Activated naive CD4-positive, alpha-beta T cell treated with anti-CD3 and anti-CD28 coated beads for 36 hours (primary cell): ENCODE measurements at regions of chr14 and their contacts with region 1.

Region 1: DNA sequence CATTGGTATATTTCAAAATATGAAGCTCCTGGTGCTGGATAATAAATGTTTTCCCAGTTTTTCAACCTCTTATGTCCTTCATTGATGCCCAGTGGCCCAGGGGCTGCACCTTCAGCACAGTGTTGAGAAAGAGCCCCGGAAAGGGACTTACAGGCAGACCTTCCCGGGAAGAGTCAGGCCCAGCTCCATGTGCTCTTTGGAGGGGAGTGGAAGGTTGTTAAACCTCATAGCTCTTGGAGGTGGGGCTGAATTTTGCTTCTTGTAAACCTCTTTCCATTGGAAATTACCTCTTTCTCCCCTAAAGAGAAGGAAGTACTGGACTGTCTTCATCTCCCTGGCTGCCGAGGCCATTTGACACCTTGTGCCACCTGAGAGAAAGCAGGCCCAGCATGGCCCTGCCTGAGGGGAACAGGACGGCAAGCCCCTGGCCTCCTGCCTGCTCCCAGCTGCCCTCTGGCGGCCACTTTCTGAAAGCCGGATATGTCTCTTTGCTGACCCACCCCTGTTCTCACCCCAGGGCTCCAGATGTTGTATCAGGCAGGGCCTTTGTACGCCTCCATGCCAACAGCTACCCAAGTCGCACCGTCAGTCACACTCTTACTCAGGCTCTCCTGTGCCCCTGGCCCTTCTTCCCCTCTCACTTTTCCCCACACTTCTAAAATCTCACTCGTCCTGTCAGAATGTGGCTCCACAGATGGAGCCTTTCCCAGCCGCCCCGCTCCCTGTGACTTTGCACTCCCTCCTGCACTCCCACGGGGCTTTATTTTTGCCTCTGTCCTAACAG is 43.0 kb downstream of the EVL start:
- DNase-seq: peak; percentile 94
- H3K4me3 Mint-ChIP-seq: no peak overlapping the region
- H3K27ac Mint-ChIP-seq: peak overlapping the region; percentile 94
- H3K4me1 Mint-ChIP-seq: peaks cover 75% of the 10 kb centered on the region
- H3K27me3 Mint-ChIP-seq: no peaks in the 10 kb centered on the region

Region 2: DNA sequence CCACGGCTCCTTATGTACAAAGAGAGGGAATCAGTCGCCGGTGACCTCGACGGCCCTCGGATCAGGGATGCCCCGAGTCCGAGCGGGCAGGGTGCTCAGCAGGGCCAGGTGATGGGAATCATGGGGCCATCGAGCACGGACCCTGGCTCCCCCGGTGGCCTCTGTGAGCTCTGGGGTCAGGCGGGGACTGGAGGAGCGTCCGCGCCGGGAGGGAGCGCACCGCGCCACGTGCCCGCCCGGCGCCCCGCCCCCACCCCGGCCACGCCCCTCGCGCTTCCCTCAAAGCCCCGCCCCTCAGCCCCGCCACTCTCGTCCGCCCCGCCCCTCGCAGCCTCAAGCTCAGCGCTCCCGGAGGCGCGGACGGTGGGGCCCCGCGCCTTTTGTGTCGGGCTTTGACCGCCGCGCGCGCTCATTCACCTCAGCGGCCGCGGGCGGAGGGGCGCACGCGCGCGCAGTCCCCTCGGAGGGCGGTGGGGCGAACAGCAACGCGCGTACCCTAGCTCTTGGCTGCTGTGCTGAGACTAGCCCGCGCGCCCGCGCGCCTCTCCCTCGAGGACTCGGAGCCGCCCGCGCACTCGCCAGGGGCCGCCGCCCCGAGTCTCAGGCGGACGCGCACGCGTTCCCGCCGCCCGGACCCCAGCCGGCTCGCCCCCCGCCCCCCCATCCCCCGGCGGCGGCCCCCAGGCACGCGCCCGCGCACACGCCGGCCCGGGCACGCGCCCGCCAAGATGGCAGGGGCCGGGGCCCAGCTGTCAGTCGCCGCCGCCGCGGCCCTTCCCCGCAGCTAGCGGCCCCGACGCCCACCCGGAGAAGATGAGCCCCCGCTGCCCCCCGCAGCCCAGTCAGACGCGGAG is 136.9 kb before region 1 on chr14:
- CTCF ChIA-PET with region 1: interaction called, 3 read pairs
- intact Hi-C with region 1: loop called (anchors 2 kb)
- DNase-seq: peak; percentile 86
- H3K4me3 Mint-ChIP-seq: peak overlapping the region; percentile 52
- H3K27ac Mint-ChIP-seq: no peak overlapping the region
- H3K4me1 Mint-ChIP-seq: peaks cover 17% of the 10 kb centered on the region
- H3K27me3 Mint-ChIP-seq: peaks cover 12% of the 10 kb centered on the region

Region 3: GRCh38 chr14:100056964-100057795 is 51.1 kb before region 1 on chr14:
- CTCF ChIA-PET with region 1: interaction called, 34 read pairs
- intact Hi-C with region 1: loop called (anchors 1 kb)
- DNase-seq: no peak
- H3K4me3 Mint-ChIP-seq: peak overlapping the region; percentile 25
- H3K27ac Mint-ChIP-seq: peak overlapping the region; percentile 80
- H3K4me1 Mint-ChIP-seq: peaks cover 52% of the 10 kb centered on the region
- H3K27me3 Mint-ChIP-seq: no peaks in the 10 kb centered on the region

Region 4: GRCh38 chr14:100091386-100091785 is 16.8 kb before region 1 on chr14:
- CTCF ChIA-PET with region 1: interaction called, 932 read pairs
- intact Hi-C with region 1: loop called (anchors 1 kb)
- DNase-seq: peak; percentile 30
- H3K4me3 Mint-ChIP-seq: peak overlapping the region; percentile 58
- H3K27ac Mint-ChIP-seq: peak overlapping the region; percentile 85
- H3K4me1 Mint-ChIP-seq: peaks cover 89% of the 10 kb centered on the region
- H3K27me3 Mint-ChIP-seq: no peaks in the 10 kb centered on the region

Region 5: GRCh38 chr14:100155042-100155846 is 47.0 kb after region 1 on chr14:
- CTCF ChIA-PET with region 1: interaction called, 11 read pairs
- intact Hi-C with region 1: no loop called
- DNase-seq: peak; percentile 60
- H3K4me3 Mint-ChIP-seq: no peak overlapping the region
- H3K27ac Mint-ChIP-seq: no peak overlapping the region
- H3K4me1 Mint-ChIP-seq: no peaks in the 10 kb centered on the region
- H3K27me3 Mint-ChIP-seq: peaks cover 17% of the 10 kb centered on the region

Region 6: DNA sequence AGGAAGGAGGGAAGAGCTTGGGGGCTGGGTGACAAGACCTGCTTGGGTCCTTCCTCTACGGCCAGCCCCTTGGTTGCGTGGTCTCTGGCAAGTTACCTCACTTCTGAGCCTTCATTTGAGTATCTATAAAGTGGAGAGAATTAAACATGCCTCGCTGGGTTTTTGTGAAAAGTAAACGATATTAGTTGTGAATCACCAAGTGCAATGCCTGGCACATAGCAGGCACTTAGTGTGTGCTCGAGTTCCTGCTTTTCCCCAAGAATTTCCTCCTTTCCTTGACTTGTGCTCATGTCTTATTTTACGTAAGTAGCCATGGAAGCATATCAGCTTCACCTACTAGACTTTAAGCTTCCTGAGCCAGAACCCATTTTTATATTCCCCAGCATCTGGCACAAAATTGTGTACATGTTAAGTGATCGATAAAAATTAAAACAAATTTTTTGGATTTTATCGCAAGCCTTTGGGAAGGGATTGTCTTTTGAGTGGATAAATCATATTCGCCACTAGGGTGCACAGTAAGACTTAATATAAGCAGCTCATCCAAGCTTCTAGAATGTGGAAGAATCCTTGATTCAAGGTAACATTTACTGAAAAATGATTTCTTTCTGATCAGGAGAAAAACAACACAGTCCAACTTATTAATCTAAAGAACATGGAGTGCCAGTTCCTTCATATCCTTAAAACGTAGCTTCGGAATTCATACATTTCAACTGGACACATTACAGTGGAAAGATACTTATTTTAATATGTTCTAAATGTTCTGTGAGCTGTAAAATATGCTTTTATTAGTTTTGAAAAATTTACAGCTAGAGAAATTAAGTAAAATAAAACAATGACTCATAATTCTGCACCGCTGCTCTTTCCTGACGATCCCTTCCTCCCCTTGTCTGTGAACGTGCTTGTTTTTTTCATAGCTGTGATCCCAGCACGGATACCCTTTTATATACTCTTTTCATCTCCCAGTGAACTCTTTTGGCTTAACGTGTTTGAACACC is 276.9 kb after region 1 on chr14:
- CTCF ChIA-PET with region 1: no interaction called
- intact Hi-C with region 1: no loop called
- DNase-seq: no peak
- H3K4me3 Mint-ChIP-seq: no peak overlapping the region
- H3K27ac Mint-ChIP-seq: no peak overlapping the region
- H3K4me1 Mint-ChIP-seq: peaks cover 23% of the 10 kb centered on the region
- H3K27me3 Mint-ChIP-seq: no peaks in the 10 kb centered on the region

Region 7: GRCh38 chr14:100470523-100470897 is 362.3 kb after region 1 on chr14:
- CTCF ChIA-PET with region 1: no interaction called
- intact Hi-C with region 1: no loop called
- DNase-seq: no peak
- H3K4me3 Mint-ChIP-seq: no peak overlapping the region
- H3K27ac Mint-ChIP-seq: no peak overlapping the region
- H3K4me1 Mint-ChIP-seq: peaks cover 5% of the 10 kb centered on the region
- H3K27me3 Mint-ChIP-seq: no peaks in the 10 kb centered on the region